Left cardiac atrium (tissue), 4 donors: ENCODE measurements at regions of chr20 and their contacts with region 1.

Region 1: GRCh38 chr20:19784511-19785172 is 26.6 kb downstream of the RIN2 start:
- DNase-seq: peak; percentile 59
- ATAC-seq: peak; percentile 77 to 78

Region 2: GRCh38 chr20:19598117-19598850 is 186.4 kb before region 1 on chr20:
- intact Hi-C with region 1: no loop called
- DNase-seq: no peak
- ATAC-seq: no peak

Region 3: GRCh38 chr20:19828232-19828631 is 43.6 kb after region 1 on chr20:
- intact Hi-C with region 1: loop called in 1 of 2 experiments (anchors 5 kb)
- DNase-seq: no peak
- ATAC-seq: peak; percentile 82 to 89

Region 4: DNA sequence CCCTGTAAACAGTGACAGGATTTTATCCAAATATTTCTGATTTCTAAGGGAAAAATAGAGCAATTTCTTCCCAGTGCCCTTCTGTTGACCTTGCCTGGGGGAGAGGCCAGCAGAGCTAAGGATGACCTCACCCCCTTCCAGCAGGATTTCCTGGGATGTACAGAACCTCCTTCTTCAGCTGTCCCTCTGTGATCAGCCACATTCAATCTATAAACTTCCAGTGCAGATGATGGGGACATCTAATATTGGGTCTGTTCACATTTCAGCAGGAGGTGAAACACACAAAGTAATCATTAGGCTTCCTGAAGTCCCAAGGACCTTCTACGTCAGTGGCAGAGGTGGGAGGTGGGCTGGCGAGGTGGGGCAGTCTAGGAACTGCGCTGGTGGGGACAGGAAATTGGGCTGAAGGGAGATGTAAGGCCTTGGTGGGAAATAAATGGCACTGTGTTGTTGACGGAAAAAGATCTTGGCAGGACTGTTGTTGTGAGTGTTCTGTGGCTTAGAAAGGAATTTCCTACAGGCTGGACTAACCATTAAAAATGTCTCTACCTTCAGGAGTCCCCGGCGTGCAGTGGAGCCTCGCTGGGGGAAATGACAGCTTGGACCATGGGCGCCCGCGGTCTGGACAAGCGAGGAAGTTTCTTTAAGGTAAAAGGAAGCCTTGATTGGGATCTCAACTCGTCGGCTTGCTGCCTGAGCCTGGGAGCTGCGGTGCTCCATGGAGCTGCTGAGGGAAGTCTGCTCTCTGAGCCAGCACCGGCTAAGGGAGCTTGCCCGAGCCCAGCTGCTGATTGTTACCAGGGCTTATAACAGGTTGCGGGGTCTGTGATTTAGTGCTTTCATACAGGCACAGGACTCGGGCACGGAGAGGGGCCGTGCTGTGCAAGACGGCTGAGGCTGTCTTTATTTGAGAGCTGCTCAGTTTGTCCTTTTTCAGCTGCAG is 104.6 kb after region 1 on chr20:
- intact Hi-C with region 1: loop called in 1 of 2 experiments (anchors 5 kb)
- DNase-seq: peak; percentile 73
- ATAC-seq: peak; percentile 68 to 75

Region 5: DNA sequence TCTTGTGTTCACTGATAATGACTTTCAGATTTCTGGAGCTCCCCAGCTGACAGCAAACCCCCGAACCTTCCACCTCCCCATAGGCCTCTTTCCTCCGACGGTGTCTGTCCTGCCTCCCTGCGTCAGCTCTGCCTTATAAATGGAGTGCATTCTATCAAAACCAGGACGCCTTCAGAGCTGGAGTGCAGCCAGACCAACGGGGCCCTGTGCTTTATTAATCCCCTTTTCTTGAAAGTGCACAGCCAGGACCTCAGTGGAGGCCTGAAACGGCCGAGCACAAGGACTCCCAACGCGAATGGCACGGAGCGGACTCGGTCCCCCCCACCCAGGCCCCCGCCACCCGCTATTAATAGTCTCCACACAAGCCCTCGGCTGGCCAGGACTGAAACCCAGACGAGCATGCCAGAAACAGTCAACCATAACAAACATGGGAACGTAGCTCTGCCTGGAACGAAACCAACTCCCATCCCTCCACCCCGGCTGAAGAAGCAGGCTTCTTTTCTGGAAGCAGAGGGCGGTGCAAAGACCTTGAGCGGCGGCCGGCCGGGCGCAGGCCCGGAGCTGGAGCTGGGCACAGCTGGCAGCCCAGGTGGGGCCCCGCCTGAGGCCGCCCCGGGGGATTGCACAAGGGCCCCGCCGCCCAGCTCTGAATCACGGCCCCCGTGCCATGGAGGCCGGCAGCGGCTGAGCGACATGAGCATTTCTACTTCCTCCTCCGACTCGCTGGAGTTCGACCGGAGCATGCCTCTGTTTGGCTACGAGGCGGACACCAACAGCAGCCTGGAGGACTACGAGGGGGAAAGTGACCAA is 190.2 kb after region 1 on chr20:
- intact Hi-C with region 1: loop called in 1 of 2 experiments (anchors 5 kb)
- DNase-seq: peak; percentile 85
- ATAC-seq: peak; percentile 83 to 88

Region 6: DNA sequence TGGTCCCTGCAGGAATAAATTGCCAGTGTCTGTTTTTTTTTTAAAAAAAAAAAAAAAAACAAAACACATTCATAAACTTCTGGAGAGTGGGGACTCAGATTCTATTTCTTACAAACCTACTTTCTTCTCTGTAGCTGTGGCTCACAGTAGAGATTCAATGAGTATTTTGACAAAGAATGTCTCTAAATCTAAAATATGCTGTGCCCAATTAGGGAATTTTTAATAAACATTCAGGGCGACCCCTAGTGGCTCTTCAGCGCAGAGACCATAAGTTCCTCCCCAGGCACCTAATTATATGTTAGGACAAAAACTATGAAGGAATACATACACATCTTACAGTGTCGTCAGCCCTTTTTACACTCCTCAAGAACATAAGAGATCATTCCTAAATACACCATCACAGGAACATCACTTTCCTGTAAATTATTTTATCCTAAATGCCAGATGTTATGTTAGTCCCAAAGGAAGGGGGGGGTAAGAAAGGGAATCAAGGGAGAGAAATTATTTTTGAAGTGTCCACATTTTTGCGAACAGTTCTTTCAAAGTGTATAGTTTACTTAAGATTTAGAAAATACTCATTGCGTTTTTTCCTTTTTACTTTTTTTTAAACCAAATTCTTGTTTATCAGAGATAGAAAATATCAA is 210.7 kb after region 1 on chr20:
- intact Hi-C with region 1: loop called (anchors 2 to 5 kb)
- DNase-seq: no peak
- ATAC-seq: peak; percentile 19 to 32